ENCODE measurements at regions of chr17 and their contacts with region 1.

Region 1: DNA sequence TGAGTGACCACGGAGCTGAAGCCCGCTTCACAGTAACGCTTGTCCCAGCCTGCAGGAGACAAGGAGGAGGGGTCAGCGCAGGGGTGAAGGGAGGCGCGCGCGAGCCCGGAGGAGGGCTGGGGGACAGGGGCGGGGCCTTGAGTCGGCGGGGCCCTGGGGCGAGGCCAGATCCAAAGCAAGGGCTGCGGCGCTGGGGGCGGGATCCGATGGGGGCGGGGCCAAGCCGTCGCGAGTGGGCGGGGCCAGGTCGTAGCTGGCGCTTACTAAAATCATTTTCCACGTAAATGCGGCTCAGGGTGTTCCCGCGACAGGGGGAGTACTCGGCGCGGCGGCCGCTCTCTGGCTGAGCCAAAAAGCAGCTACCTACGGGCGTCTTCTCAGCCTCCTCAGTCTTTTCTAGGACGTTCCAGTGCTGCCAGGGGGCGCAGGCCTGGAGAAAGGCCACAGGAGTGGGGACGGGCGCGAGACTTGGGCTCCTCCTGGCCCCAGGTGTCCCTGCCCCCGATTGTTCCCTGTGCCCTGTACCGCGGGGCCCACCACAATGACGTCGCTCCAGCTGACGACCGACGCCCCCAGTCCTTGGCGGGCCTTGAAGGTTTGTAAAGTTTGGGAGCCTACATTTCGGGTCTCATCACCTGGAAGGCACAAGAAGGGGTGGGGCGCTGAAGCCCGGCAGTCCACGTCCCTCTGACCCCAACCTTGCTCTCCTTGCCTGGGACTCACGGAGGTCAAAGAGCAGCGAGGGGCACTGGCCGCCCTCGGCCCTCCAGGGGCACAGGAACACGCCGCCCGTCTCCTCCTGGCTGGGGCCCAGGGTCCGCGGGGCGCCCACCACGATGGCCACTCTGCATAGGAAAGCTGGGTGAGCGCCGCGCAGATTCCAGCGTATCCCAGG is 3.9 kb downstream of the ITGA2B start:
- DNase-seq: peak; percentile 94
- H3K4me3 ChIP-seq: peak overlapping the region; percentile 58
- H3K4me3 Mint-ChIP-seq: peak overlapping the region; percentile 73
- H3K27ac Mint-ChIP-seq: peak overlapping the region; percentile 59
- H3K4me1 ChIP-seq: 0 out of 2 replicates have a peak, but pooled peaks cover under 1% of the 10 kb centered on the region
- H3K4me1 Mint-ChIP-seq: no peaks in the 10 kb centered on the region
- H3K27me3 ChIP-seq: no peaks in the 10 kb centered on the region
- H3K27me3 Mint-ChIP-seq: peaks cover 5% of the 10 kb centered on the region
- CTCF ChIP-seq: peak; percentile 41 to 44

Region 2: GRCh38 chr17:44363613-44364159 is 21.8 kb before region 1 on chr17 and contains the start of gene FAM171A2:
- CTCF ChIA-PET with region 1: interaction called, 12 read pairs
- POLR2A ChIA-PET with region 1: no interaction called
- intact Hi-C with region 1: no loop called
- DNase-seq: peak; percentile 49 to 83
- H3K4me3 ChIP-seq: peak within 1 kb of the TSS; percentile 69
- H3K4me3 Mint-ChIP-seq: peak within 1 kb of the TSS; percentile 70
- H3K27ac Mint-ChIP-seq: no peak within 1 kb of the TSS
- H3K4me1 ChIP-seq: peaks cover 10% of the 10 kb centered on the region; the same call in 1 of the 2 replicates
- H3K4me1 Mint-ChIP-seq: peaks cover 17% of the 10 kb centered on the region
- H3K27me3 ChIP-seq: 0 out of 2 replicates have a peak, but pooled peaks cover 1% of the 10 kb centered on the region
- H3K27me3 Mint-ChIP-seq: peaks cover 10% of the 10 kb centered on the region
- CTCF ChIP-seq: peak; percentile 55 to 80
- total RNA-seq, gene FAM171A2: 3.0 and 3.6 TPM in 2 replicates

Region 3: GRCh38 chr17:44432254-44433157 is 47.0 kb after region 1 on chr17:
- CTCF ChIA-PET with region 1: no interaction called
- POLR2A ChIA-PET with region 1: no interaction called
- intact Hi-C with region 1: no loop called
- DNase-seq: no peak
- H3K4me3 ChIP-seq: no peak overlapping the region
- H3K4me3 Mint-ChIP-seq: no peak overlapping the region
- H3K27ac Mint-ChIP-seq: peak overlapping the region; percentile 12
- H3K4me1 ChIP-seq: 0 out of 2 replicates have a peak, but pooled peaks cover 6% of the 10 kb centered on the region
- H3K4me1 Mint-ChIP-seq: peaks cover 10% of the 10 kb centered on the region
- H3K27me3 ChIP-seq: no peaks in the 10 kb centered on the region
- H3K27me3 Mint-ChIP-seq: no peaks in the 10 kb centered on the region
- CTCF ChIP-seq: no peak